Endothelial cell of umbilical vein (primary cell): ENCODE measurements at regions of chr6 and their contacts with region 1.

Region 1: DNA sequence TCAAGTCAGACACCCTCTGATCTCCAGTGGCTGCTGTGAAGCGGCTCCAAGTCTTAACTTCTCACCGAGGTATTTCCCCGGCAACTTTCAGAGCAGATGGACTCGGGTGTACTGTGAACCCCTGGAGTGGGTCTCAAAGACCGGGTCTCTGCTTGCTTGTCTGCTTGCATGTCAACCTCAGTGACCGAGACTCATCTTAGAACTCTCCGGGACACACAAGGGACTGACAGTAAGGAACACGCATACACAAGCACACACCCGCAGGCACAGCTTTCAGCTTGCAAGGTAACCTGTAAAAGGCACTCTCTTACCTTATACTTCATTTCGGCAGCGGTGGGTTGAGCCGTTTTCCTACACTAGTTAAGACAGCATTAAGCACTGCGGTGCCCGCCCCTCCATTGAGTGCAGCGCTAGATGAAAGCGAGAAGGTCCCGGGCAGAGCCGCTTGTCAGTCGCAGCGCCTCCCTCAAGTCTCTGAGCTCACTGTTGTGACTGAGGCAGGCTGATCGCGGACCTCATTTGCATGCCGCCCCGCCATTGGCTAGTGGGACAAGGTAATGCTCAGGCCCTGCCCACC is at the start of gene NEDD9:
- DNase-seq: peak; percentile 98
- H3K4me3 ChIP-seq: peak within 1 kb of the TSS; percentile 69 to 93 (median 70)
- H3K27ac ChIP-seq: peak within 1 kb of the TSS; percentile 93
- H3K4me1 ChIP-seq: peaks cover 36% of the 10 kb centered on the region
- H3K27me3 ChIP-seq: no peaks in the 10 kb centered on the region
- CTCF ChIP-seq: no peak
- POLR2A ChIP-seq: peak; percentile 98
- total RNA-seq, gene NEDD9: 55.2 and 73.0 TPM in 2 replicates

Region 2: GRCh38 chr6:11093589-11094410 is 138.5 kb before region 1 on chr6 and contains the start of gene SMIM13:
- CTCF ChIA-PET with region 1: no interaction called
- POLR2A ChIA-PET with region 1: interaction called, 3 read pairs
- dilution Hi-C with region 1: no loop called
- intact Hi-C with region 1: loop called (anchors 2 kb)
- DNase-seq: peak; percentile 99
- H3K4me3 ChIP-seq: peak within 1 kb of the TSS; percentile 54 to 98 (median 86)
- H3K27ac ChIP-seq: peak within 1 kb of the TSS; percentile 87
- H3K4me1 ChIP-seq: peaks cover 18% of the 10 kb centered on the region
- H3K27me3 ChIP-seq: no peaks in the 10 kb centered on the region
- CTCF ChIP-seq: peak; percentile 38 to 47
- POLR2A ChIP-seq: peak; percentile 68
- total RNA-seq, gene SMIM13: 14.7 and 19.4 TPM in 2 replicates

Region 3: DNA sequence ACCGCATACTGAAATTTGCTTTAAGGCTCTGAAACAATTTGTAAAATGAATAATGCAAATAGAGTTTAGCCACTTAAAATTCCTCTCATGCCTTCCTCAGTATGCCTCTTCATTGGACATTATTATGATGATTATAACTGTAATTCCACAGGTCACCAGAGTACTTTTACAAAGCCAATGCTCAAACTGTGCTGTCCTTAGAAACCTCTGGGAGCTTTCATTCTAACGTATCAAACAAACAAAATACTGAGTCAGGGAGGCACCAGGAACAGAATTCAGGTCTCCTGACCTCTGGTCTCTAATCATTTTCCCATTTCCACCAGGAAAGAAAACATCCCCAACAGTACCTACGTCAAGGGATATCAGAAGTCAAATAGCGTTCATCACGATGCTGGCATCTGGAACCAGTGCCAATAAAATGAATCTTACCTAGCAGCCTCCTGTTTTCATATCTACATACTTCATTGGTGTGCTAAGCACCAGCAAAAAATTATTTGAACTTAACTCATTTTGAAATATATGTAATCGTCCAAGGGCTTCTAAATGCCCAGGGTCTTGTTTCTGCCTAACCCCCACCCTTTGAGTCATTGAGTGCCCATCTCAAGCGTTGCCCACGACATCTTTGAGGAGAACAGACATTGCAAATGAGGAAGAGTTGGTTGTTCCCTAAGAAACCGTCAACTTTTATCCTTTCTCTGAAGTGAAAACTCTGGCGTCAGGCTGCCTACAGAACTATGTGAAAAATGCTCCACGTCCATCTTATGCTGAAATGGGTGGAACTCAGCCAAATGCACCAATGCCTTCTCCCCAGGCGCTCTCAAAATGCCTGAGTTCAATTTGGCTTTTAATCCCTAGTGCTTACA is 37.7 kb before region 1 on chr6:
- CTCF ChIA-PET with region 1: interaction called, 5 read pairs
- POLR2A ChIA-PET with region 1: interaction called, 3 read pairs
- dilution Hi-C with region 1: no loop called
- intact Hi-C with region 1: loop called (anchors 1 kb)
- DNase-seq: peak; percentile 91
- H3K4me3 ChIP-seq: peak overlapping the region in 1 of 3 experiments; percentile 9
- H3K27ac ChIP-seq: peak overlapping the region; percentile 98
- H3K4me1 ChIP-seq: peaks cover 37% of the 10 kb centered on the region
- H3K27me3 ChIP-seq: no peaks in the 10 kb centered on the region
- CTCF ChIP-seq: peak in 1 of 2 donors; percentile 9
- POLR2A ChIP-seq: peak; percentile 38

Region 4: DNA sequence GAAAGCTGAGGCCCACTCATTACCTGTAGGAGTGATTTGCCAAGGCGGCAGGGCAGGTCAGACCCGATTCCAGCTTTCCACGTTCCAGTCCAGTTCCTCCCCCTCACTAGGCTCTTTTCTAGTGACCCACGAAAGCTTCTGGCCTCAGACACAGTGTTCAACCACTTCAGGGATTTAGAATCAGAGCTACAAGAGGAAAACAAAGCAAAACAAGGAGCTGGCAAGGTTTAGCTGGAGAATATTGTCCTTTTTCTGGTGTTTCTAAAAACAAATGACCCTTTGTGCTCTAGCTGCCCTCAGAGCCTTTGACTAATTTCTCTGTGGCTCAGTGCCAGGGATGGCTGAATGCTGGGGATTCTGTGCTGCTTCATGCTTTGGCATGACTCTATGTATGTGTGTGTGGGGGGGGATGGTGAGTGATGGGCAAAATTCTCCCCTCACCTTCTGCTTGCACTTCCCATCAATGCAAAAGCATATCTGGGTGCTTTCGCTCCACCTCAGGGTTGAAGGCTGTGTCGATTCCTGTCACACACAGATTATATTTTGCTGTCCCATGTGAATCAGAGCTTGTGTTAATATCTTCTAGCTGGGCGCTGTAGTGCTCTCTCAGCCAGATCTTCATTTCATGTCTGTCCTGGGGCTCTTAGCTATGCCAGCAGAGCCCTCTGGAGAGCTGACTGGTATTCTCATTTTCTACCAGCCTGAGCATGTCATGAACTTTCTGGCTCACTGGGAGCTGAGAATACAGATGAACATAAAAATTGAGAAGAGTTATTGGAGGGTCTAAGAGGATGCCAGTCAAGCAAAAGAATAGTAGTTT is 19.5 kb after region 1 on chr6:
- CTCF ChIA-PET with region 1: interaction called, 4 read pairs
- POLR2A ChIA-PET with region 1: interaction called, 11 read pairs
- dilution Hi-C with region 1: no loop called
- intact Hi-C with region 1: no loop called
- DNase-seq: peak; percentile 92
- H3K4me3 ChIP-seq: no peak overlapping the region
- H3K27ac ChIP-seq: peak overlapping the region; percentile 57
- H3K4me1 ChIP-seq: peaks cover 22% of the 10 kb centered on the region
- H3K27me3 ChIP-seq: no peaks in the 10 kb centered on the region
- CTCF ChIP-seq: no peak
- POLR2A ChIP-seq: no peak

Region 5: GRCh38 chr6:11353921-11354389 is 121.7 kb after region 1 on chr6:
- CTCF ChIA-PET with region 1: interaction called, 4 read pairs
- POLR2A ChIA-PET with region 1: interaction called, 8 read pairs
- dilution Hi-C with region 1: no loop called
- intact Hi-C with region 1: loop called (anchors 1 kb)
- DNase-seq: peak; percentile 94
- H3K4me3 ChIP-seq: peak overlapping the region in 1 of 3 experiments; percentile 7
- H3K27ac ChIP-seq: peak overlapping the region; percentile 97
- H3K4me1 ChIP-seq: peaks cover 31% of the 10 kb centered on the region
- H3K27me3 ChIP-seq: no peaks in the 10 kb centered on the region
- CTCF ChIP-seq: no peak
- POLR2A ChIP-seq: no peak

Region 6: DNA sequence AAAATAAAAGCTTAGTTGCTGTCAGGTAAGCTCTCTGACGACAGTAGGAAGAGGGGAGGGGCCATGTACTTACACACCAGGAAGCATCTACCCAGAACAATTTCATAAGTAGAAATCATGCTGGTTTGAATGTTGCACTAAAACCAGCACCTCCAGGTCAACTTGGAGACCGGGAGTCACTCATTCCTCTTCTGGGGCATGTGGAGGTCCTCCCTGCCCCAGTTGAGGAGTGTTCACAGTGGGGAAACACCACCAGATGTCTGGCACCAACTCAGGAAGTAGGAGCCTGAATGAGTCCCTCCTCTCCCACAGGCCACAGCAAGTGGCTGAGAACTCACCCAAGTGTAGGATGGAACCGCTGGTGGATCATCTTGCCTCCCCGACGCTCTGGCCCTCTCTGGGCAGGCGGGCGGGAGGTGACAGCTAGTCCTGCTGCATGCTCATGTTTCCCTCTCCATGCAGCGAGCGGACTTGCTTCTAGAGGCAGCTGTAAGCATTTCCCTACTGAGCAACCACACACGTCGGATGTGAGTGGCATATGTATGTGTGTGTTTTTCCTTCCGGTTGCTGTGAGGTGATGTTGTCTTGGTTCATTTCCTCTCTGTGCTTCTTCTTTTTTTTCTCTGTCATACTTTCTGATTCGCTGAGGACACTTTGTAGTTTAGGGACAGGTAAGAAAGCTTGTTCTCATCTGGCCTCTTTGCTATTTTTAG is 149.7 kb after region 1 on chr6:
- CTCF ChIA-PET with region 1: no interaction called
- POLR2A ChIA-PET with region 1: no interaction called
- dilution Hi-C with region 1: no loop called
- intact Hi-C with region 1: no loop called
- DNase-seq: no peak
- H3K4me3 ChIP-seq: no peak overlapping the region
- H3K27ac ChIP-seq: no peak overlapping the region
- H3K4me1 ChIP-seq: no peaks in the 10 kb centered on the region
- H3K27me3 ChIP-seq: peaks cover 7% of the 10 kb centered on the region in 2 experiments
- CTCF ChIP-seq: no peak
- POLR2A ChIP-seq: no peak

Region 7: DNA sequence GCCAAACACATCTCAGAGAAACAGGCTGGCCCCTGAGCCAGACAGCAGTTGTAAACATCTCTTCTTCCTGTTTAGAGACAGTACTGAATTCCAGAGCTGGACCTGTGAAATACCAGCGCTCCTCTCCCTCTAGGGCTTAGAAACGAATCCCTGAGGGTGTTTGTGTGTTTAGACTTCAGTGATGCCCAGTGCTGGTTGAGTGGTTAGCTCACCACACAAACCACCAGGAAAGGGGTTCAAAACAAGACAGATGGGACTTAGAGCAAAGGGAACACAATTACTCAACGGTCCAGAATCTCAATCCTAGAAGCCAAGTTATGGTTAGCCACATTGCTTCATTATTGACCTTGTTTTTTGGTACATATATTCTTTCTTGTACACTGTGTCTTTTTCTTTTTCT is 196.6 kb after region 1 on chr6:
- CTCF ChIA-PET with region 1: no interaction called
- POLR2A ChIA-PET with region 1: interaction called, 3 read pairs
- dilution Hi-C with region 1: no loop called
- intact Hi-C with region 1: loop called (anchors 2 kb)
- DNase-seq: no peak
- H3K4me3 ChIP-seq: no peak overlapping the region
- H3K27ac ChIP-seq: peak overlapping the region; percentile 79
- H3K4me1 ChIP-seq: peaks cover 70% of the 10 kb centered on the region
- H3K27me3 ChIP-seq: no peaks in the 10 kb centered on the region
- CTCF ChIP-seq: no peak
- POLR2A ChIP-seq: no peak